Common myeloid progenitor, CD34-positive (primary cell): ENCODE measurements at regions of chr21 and their contacts with region 1.

Region 1: DNA sequence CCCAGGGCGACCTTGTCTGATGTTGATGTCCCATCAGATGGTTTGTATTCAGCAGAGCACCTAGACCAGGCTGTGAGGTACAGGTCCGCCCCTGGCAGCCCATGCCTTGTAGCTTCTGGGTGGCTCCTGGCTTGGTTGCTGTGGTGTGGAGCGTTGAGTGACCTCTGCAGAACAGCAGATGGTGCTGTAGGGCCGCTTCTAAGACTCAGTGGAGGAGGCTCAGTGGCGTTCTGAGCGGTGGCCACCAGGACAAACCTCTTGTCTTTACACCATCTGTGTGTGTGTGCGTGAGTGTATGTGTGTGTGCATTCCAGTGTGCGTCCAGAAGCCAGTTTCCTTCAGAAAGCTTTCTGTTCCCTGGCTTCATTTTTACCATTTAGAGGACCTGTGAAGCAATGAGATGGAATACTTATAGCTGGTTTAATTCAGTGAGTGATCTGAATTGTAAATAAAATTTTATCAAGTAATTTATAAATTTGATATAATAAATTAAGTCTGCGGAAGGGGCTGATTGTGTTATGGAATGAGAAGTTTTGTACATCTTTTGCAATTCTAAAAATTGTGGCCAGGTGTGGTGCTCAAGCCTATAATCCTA is 66.1 kb downstream of the ADARB1 start:
- DNase-seq: peak; percentile 94 to 98 (median 98)
- H3K4me3 ChIP-seq: no peak overlapping the region
- H3K27ac ChIP-seq: no peak overlapping the region
- H3K4me1 ChIP-seq: peaks cover 0 to 3% (median 2%) of the 10 kb centered on the region in 4 experiments
- H3K27me3 ChIP-seq: no peaks in the 10 kb centered on the region

Region 2: GRCh38 chr21:44949779-44950198 is 190.7 kb before region 1 on chr21:
- CTCF ChIA-PET with region 1: interaction called, 193 read pairs
- POLR2A ChIA-PET with region 1: interaction called, 3 read pairs
- DNase-seq: peak; percentile 59 to 67 (median 64)
- H3K4me3 ChIP-seq: no peak overlapping the region
- H3K27ac ChIP-seq: no peak overlapping the region
- H3K4me1 ChIP-seq: peaks cover 0 to 17% (median 6%) of the 10 kb centered on the region in 4 experiments
- H3K27me3 ChIP-seq: no peaks in the 10 kb centered on the region

Region 3: DNA sequence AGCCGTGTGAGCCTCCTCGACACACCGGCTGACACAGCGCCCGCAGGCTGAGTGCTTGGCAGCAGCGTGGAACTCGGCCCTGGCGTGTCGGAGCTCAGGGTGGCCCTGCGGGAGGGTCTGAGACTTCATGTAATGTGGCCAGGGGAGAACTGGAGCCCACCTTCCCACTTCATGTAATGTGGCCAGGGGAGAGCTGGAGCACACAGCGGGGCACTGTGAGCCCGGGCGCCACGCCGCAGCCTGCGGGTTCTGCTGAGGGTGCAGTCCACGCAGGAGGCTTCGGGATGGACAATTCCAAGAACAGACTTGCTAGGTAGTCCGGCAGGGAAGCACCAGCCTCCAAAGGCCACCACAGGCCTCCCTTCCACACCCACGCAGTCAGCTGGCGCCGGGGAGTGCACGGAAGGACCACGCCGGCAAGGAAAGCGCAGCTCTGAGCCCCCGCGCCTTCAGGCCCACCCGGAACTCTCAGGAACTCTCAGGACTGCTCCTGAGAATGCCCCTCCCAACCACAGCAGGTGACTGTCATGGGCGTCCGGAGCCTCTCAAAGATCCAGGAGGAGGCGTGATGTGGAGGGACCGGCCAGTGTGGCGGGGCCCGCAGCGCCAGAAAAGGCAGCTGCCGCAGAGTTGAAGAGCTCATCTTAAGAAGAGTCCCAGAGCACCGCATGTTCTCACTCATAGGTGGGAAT is 85.4 kb before region 1 on chr21:
- CTCF ChIA-PET with region 1: interaction called, 12 read pairs
- POLR2A ChIA-PET with region 1: no interaction called
- DNase-seq: no peak
- H3K4me3 ChIP-seq: no peak overlapping the region
- H3K27ac ChIP-seq: no peak overlapping the region
- H3K4me1 ChIP-seq: no peaks in the 10 kb centered on the region
- H3K27me3 ChIP-seq: peaks cover 0 to 21% (median 12%) of the 10 kb centered on the region in 5 experiments

Region 4: GRCh38 chr21:45115141-45115540 is 25.3 kb before region 1 on chr21:
- CTCF ChIA-PET with region 1: interaction called, 11 read pairs
- POLR2A ChIA-PET with region 1: no interaction called
- DNase-seq: no peak
- H3K4me3 ChIP-seq: no peak overlapping the region
- H3K27ac ChIP-seq: no peak overlapping the region
- H3K4me1 ChIP-seq: peaks cover 8 to 46% (median 19%) of the 10 kb centered on the region in 4 experiments
- H3K27me3 ChIP-seq: peaks cover 0 to 14% (median 0%) of the 10 kb centered on the region in 5 experiments

Region 5: GRCh38 chr21:45152265-45152746 is 11.9 kb after region 1 on chr21:
- CTCF ChIA-PET with region 1: interaction called, 119 read pairs
- POLR2A ChIA-PET with region 1: interaction called, 3 read pairs
- DNase-seq: peak; percentile 87 to 98 (median 96)
- H3K4me3 ChIP-seq: peak overlapping the region; percentile 35 to 75 (median 59)
- H3K27ac ChIP-seq: peak overlapping the region; percentile 18 to 76
- H3K4me1 ChIP-seq: peaks cover 4 to 38% (median 26%) of the 10 kb centered on the region in 4 experiments
- H3K27me3 ChIP-seq: no peaks in the 10 kb centered on the region

Region 6: GRCh38 chr21:45287438-45288391 is 147.3 kb after region 1 on chr21 and contains the start of gene POFUT2:
- CTCF ChIA-PET with region 1: interaction called, 87 read pairs
- POLR2A ChIA-PET with region 1: interaction called, 3 read pairs
- DNase-seq: peak; percentile 93 to 97 (median 95)
- H3K4me3 ChIP-seq: peak within 1 kb of the TSS; percentile 64 to 86 (median 74)
- H3K27ac ChIP-seq: peak within 1 kb of the TSS in 1 of 2 experiments; percentile 81
- H3K4me1 ChIP-seq: peaks cover 0 to 21% (median 19%) of the 10 kb centered on the region in 4 experiments
- H3K27me3 ChIP-seq: no peaks in the 10 kb centered on the region

Region 7: GRCh38 chr21:45820171-45821091 is 680.0 kb after region 1 on chr21:
- CTCF ChIA-PET with region 1: interaction called, 10 read pairs
- POLR2A ChIA-PET with region 1: no interaction called
- DNase-seq: peak; percentile 82 to 89 (median 83)
- H3K4me3 ChIP-seq: no peak overlapping the region
- H3K27ac ChIP-seq: no peak overlapping the region
- H3K4me1 ChIP-seq: peaks cover 0 to 5% (median 0%) of the 10 kb centered on the region in 4 experiments
- H3K27me3 ChIP-seq: peaks cover 0 to 6% (median 0%) of the 10 kb centered on the region in 5 experiments